Activated T-helper 1 cell treated with anti-CD3 and anti-CD28 coated beads, Interleukin-12 subunit alpha, Interleukin-12 subunit beta, Interleukin-2, Interleukin-4 antibody, amounts not matched to agents 30 ng/mL and 10 ng/mL and 1 ng/mL, durations not matched to agents 14 hours and 24 hours and 36 hours (primary cell): ENCODE measurements at regions of chr22 and their contacts with region 1.

Region 1: GRCh38 chr22:23178512-23179254 is 1.6 kb upstream of the BCR start:
- DNase-seq: peak; percentile 42
- H3K4me3 Mint-ChIP-seq: peak overlapping the region; percentile 85
- H3K27ac Mint-ChIP-seq: peak overlapping the region; percentile 33
- H3K4me1 Mint-ChIP-seq: peaks cover 50% of the 10 kb centered on the region
- H3K27me3 Mint-ChIP-seq: no peaks in the 10 kb centered on the region

Region 2: GRCh38 chr22:23163665-23164064 is 15.0 kb before region 1 on chr22:
- intact Hi-C with region 1: no loop called
- DNase-seq: no peak
- H3K4me3 Mint-ChIP-seq: no peak overlapping the region
- H3K27ac Mint-ChIP-seq: no peak overlapping the region
- H3K4me1 Mint-ChIP-seq: no peaks in the 10 kb centered on the region
- H3K27me3 Mint-ChIP-seq: peaks cover 11% of the 10 kb centered on the region

Region 3: DNA sequence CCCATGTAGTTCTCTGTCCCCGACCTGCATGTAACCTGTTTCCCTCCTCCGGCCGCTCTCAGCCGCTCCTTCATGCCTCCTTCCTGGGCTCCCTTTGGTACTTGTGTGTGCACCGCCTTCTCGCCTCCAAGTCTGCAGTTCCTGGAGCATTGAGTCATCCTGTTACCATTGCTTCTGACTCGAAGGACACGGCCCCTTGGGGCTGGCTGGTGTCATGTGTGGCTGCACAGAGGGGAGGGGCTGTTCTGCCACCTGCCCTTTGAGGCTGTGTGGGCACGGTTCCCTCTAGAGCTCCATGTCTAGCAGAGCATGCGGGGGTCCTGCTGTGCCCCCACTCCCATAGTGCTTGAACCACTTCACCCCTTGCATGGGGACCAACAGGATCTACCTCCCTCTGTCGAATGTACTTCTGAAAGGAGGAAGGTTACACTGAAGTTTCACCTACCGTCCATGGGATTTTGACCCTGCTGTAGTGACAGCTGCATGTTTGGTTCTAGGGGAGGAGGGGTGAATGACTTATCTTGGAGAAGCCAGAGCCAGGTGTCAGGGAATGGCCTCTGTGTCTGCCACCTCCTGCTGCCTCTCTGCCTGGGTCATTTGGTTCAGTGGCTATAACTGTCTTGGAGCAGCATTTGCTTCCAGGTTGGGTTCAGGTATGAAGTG is 41.3 kb after region 1 on chr22:
- intact Hi-C with region 1: loop called (anchors 1 kb)
- DNase-seq: peak; percentile 57
- H3K4me3 Mint-ChIP-seq: peak overlapping the region; percentile 76
- H3K27ac Mint-ChIP-seq: peak overlapping the region; percentile 94
- H3K4me1 Mint-ChIP-seq: peaks cover 92% of the 10 kb centered on the region
- H3K27me3 Mint-ChIP-seq: no peaks in the 10 kb centered on the region

Region 4: DNA sequence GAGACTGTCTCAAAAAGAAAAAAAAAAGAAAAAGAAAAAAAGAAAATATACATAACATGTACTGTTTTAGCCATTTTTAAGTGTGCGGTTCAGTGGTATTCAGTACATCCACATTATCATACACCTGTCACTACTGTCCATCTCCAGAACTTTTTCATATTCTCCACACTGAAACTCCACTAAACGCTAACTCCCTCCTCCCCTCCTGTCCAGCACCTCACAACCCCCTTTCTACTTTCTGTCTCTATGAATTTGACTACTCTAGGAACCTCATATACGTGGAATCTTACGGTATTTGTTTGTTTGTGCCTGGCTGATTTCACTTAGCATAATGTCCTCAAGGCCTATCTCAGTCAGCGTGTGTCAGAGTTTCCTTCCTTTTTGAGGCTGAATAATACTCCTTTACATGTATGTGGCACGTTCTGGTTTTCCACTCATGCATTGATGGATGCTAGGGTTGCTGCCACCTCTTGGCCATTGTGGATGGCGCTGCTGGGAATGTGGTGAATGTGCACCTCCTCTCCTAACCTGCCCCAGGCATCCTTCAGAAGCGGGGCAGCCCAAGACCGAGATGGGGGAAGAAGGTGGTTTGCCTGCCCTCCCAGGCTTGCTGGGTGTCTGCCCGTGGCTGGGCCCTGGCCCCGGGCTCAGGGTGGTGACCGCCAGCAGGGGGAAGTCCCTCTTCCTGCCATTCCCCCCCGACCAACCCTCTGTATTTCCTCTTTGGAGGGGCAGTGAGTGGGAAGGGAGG is 62.1 kb after region 1 on chr22:
- intact Hi-C with region 1: loop called (anchors 1 kb)
- DNase-seq: no peak
- H3K4me3 Mint-ChIP-seq: peak overlapping the region; percentile 21
- H3K27ac Mint-ChIP-seq: peak overlapping the region; percentile 91
- H3K4me1 Mint-ChIP-seq: peaks cover 75% of the 10 kb centered on the region
- H3K27me3 Mint-ChIP-seq: no peaks in the 10 kb centered on the region

Region 5: GRCh38 chr22:23281406-23282088 is 102.9 kb after region 1 on chr22:
- intact Hi-C with region 1: loop called (anchors 1 kb)
- DNase-seq: peak; percentile 68
- H3K4me3 Mint-ChIP-seq: no peak overlapping the region
- H3K27ac Mint-ChIP-seq: no peak overlapping the region
- H3K4me1 Mint-ChIP-seq: peaks cover 31% of the 10 kb centered on the region
- H3K27me3 Mint-ChIP-seq: no peaks in the 10 kb centered on the region

Region 6: DNA sequence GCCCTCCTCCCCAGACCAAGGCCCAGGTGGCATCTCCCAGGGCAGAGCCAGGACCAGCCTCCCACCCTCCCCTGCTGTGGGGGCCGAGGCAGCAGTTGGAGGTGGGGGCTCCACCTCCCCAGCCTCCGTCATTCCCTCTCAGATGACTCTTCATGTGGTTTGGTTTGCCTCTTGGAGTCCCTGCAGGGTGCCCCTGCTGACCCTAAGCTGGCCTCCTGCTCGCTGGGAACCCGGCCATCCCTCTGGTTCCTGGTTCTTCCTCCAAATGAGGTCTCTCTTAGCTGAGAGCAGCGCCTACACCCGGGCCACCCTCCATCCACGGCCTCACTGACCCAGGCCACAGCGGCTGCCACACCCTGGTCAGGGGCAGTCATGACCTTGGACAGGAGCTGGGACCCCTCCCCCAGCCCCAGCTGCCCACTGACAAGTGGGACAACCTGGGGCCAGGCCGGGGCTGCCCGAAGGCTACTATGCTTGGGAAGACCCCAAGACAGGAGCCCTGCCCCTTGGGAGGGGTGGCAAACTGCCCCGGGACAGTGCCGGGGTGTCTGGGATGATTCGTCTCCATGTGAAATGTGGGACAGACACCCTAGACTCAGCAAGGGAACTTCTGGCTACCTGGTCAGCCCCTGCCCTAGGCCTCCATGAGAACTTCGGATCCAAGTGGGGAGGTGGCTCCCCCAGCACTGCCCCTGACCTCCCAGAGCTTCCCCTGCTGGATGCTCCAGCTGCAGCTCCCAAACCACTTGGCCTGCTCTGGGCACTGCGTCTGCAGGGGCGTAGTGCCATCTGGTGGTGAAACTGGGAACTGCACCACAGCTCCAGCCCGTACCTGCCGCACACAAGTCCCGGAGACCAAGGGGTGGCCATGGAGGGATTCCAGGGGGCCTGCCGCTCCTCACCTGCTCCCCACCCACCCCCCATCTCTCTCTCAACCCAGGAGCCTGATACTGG is 206.9 kb after region 1 on chr22:
- intact Hi-C with region 1: loop called (anchors 1 kb)
- DNase-seq: peak; percentile 67
- H3K4me3 Mint-ChIP-seq: no peak overlapping the region
- H3K27ac Mint-ChIP-seq: no peak overlapping the region
- H3K4me1 Mint-ChIP-seq: no peaks in the 10 kb centered on the region
- H3K27me3 Mint-ChIP-seq: peaks cover 2% of the 10 kb centered on the region